A549 (cell line): ENCODE measurements at regions of chr19 and their contacts with region 1.

Region 1: DNA sequence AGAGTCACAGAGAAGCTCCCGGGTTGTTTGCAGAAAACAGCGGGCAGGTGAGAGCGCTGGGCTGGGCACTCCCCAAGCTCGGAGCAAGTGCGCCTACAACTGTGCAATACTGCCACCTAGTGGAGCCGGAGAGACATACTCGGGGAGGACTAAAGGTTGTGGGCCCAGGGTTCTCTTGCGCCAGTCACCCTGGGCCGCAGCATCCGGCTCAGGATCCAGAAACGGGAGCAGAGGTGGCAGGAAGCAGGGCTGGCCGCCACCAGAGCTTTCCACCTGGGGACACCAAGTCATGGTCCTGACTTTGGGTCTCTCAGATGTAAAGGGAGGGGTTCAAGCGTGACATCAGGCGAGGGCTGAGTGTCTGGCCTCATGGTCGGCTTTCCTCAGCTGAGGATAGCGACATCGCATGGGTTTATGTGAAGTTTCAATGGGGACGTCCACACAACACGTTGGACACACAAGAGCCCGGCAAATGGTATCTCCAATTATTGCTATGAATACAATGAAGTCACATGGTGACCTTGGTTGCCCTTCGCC is 11.2 kb upstream of the KLK4 start:
- DNase-seq: peak; percentile 89 to 91
- ATAC-seq: peak; percentile 97 to 100
- H3K4me3 ChIP-seq: no peak overlapping the region
- H3K27ac ChIP-seq: no peak overlapping the region
- H3K4me1 ChIP-seq: peaks cover 14% of the 10 kb centered on the region; the same call in 1 of the 3 replicates
- CTCF ChIP-seq: peak; percentile 96
- EP300 ChIP-seq: no peak
- POLR2A ChIP-seq: no peak
- RAD21 ChIP-seq: peak; percentile 95 to 97

Region 2: DNA sequence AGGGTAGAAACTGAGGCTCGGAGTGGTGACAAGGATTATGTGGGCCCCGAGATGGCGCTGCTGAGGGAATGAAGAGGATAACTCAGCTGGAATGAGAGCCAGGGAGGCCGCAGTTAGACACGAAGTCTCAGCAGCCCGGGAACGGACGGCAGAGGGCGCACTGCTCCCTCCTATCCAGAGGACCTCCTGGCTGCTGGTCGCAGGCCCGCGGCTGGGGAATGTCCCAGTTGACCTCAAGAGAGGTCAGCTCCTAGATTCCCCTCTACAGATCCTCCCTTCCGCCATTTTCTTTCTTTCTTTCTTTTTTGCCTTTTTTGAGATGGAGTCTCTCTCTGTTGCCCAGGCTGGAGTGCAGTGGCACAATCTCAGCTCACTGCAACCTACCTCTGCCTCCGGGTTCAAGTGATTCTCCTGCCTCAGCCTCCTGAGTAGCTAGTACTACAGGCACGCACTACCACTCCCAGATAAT is 384.6 kb before region 1 on chr19:
- CTCF ChIA-PET with region 1: interaction called, 29 read pairs
- POLR2A ChIA-PET with region 1: no interaction called
- DNase-seq: peak; percentile 95 to 98
- ATAC-seq: peak; percentile 90 to 98
- H3K4me3 ChIP-seq: no peak overlapping the region
- H3K27ac ChIP-seq: no peak overlapping the region
- H3K4me1 ChIP-seq: no peaks in the 10 kb centered on the region
- CTCF ChIP-seq: peak; percentile 98
- EP300 ChIP-seq: no peak
- POLR2A ChIP-seq: no peak
- RAD21 ChIP-seq: peak; percentile 87

Region 3: GRCh38 chr19:50777754-50778303 is 144.6 kb before region 1 on chr19:
- CTCF ChIA-PET with region 1: interaction called, 56 read pairs
- POLR2A ChIA-PET with region 1: no interaction called
- DNase-seq: peak in 1 of 2 experiments; percentile 71
- ATAC-seq: peak; percentile 36 to 62; a peak in 5 of 6 replicates
- H3K4me3 ChIP-seq: peak overlapping the region; percentile 29; the same call in 2 of the 3 replicates
- H3K27ac ChIP-seq: no peak overlapping the region
- H3K4me1 ChIP-seq: peaks cover 14% of the 10 kb centered on the region; the same call in 1 of the 3 replicates
- CTCF ChIP-seq: no peak
- EP300 ChIP-seq: no peak
- POLR2A ChIP-seq: no peak
- RAD21 ChIP-seq: no peak

Region 4: DNA sequence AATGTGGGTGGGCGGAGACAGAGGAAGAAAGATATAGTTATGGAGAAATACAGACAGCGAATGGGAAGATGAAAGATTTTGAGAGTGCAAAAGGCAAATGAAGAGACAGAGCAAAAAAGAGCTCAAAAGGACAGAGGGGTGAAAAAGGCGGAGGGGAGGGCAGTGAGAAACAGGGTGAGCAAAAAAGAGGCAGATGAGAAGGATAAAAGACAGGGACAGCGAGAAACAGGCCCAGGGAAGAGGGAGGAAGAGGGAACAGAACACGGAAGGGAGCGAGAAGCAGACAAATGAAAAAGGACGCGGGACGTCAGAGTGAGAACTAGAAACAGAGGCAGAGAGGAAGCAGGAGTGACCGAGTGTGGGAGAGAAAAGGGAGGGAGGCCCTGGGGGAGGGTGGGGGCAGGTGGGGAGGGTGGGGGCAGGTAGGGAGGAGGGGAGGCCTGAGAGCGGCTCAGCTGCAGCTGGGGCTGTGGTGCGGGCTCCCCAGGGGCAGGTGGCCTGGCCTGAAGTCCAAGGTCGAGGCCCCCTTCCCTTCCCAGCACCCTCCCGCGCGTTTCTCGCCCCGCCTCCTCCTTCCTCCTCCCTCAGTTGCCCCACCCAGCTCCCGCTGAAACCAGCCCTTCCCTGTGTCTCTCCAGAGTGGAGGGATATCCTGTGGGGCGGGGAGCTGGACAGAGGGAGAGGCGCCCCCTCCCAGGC is 101.7 kb before region 1 on chr19:
- CTCF ChIA-PET with region 1: interaction called, 25 read pairs
- POLR2A ChIA-PET with region 1: no interaction called
- DNase-seq: no peak
- ATAC-seq: no peak
- H3K4me3 ChIP-seq: no peak overlapping the region
- H3K27ac ChIP-seq: no peak overlapping the region
- H3K4me1 ChIP-seq: peaks cover 13% of the 10 kb centered on the region; the same call in 1 of the 3 replicates
- CTCF ChIP-seq: no peak
- EP300 ChIP-seq: no peak
- POLR2A ChIP-seq: no peak
- RAD21 ChIP-seq: no peak

Region 5: GRCh38 chr19:50890422-50891252 is 31.7 kb before region 1 on chr19:
- CTCF ChIA-PET with region 1: interaction called, 47 read pairs
- POLR2A ChIA-PET with region 1: no interaction called
- DNase-seq: peak; percentile 39 to 44
- ATAC-seq: peak; percentile 58 to 80; a peak in 4 of 6 replicates
- H3K4me3 ChIP-seq: no peak overlapping the region
- H3K27ac ChIP-seq: peak overlapping the region in 1 of 2 experiments; percentile 41; a peak in 2 of 6 replicates
- H3K4me1 ChIP-seq: peaks cover 9% of the 10 kb centered on the region; the same call in 2 of the 3 replicates
- CTCF ChIP-seq: no peak
- EP300 ChIP-seq: no peak
- POLR2A ChIP-seq: no peak
- RAD21 ChIP-seq: no peak

Region 6: DNA sequence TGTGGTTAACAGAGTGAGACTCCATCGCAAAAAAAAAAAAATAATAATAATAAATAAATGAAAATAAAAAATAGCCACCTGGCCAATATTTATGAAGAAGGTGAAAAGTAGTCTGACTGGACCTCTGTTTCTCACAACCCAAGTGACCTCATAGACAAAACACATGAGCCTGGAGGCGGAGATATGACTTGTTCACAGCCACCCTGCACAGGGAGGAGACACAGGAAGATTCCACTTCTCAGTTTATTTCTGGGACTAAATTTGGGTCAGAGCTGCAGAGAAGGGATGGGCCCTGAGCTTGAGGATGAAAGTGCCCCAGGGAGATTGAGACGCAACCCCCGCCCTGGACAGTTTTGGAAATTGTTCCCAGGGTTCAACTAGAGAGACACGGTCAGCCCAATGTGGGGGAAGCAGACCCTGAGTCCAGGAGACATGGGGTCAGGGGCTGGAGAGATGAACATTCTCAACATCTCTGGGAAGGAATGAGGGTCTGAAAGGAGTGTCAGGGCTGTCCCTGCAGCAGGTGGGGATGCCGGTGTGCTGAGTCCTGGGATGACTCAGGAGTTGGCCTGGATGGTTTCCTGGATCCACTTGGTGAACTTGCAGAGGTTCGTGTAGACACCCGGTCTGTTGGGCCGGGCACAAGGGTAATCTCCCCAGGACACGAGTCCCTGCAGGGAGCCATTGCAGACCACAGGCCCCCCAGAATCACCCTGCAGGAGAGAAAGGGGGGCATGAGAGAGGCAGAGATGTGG is 20.9 kb after region 1 on chr19:
- CTCF ChIA-PET with region 1: interaction called, 10 read pairs
- POLR2A ChIA-PET with region 1: no interaction called
- DNase-seq: no peak
- ATAC-seq: no peak
- H3K4me3 ChIP-seq: no peak overlapping the region
- H3K27ac ChIP-seq: no peak overlapping the region
- H3K4me1 ChIP-seq: no peaks in the 10 kb centered on the region
- CTCF ChIP-seq: no peak
- EP300 ChIP-seq: no peak
- POLR2A ChIP-seq: no peak
- RAD21 ChIP-seq: no peak

Region 7: GRCh38 chr19:51111425-51112005 is 189.1 kb after region 1 on chr19:
- CTCF ChIA-PET with region 1: no interaction called
- POLR2A ChIA-PET with region 1: no interaction called
- DNase-seq: peak; percentile 55 to 64
- ATAC-seq: peak; percentile 31 to 36; a peak in 4 of 6 replicates
- H3K4me3 ChIP-seq: no peak overlapping the region
- H3K27ac ChIP-seq: no peak overlapping the region
- H3K4me1 ChIP-seq: peaks cover 10% of the 10 kb centered on the region
- CTCF ChIP-seq: no peak
- EP300 ChIP-seq: no peak
- POLR2A ChIP-seq: no peak
- RAD21 ChIP-seq: no peak